ENCODE measurements at regions of chr17 and their contacts with region 1.

Region 1: GRCh38 chr17:58447039-58447975 is 30.0 kb upstream of the RNF43 start:
- DNase-seq: peak; percentile 68 to 92 (median 73)
- ATAC-seq: peak; percentile 100
- H3K4me3 ChIP-seq: no peak overlapping the region
- H3K27ac ChIP-seq: no peak overlapping the region
- H3K4me1 ChIP-seq: no peaks in the 10 kb centered on the region
- H3K27me3 ChIP-seq: no peaks in the 10 kb centered on the region
- CTCF ChIP-seq: peak; percentile 90 to 98 (median 96)
- EP300 ChIP-seq: no peak
- POLR2A ChIP-seq: no peak
- RAD21 ChIP-seq: peak; percentile 95 to 99

Region 2: DNA sequence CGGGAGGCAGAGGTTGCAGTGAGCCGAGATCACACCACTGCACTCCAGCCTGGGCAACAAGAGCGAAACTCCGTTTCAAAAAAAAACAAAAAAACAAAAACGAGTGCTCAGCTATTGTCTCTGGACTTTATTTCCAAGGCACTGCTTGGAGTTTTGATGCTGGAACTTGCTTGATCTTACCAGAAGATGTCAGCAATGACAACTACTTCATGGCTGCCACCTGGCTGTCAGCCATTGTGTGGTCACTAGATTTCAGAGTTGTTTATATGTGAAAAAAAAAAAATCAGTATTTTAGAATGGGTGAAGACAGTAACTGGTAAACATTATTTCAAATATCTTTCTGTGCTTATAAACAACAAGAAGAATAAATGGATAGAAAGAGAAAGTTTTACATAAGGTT is 325.4 kb before region 1 on chr17:
- CTCF ChIA-PET with region 1: interaction called, 12 read pairs
- POLR2A ChIA-PET with region 1: no interaction called
- in situ Hi-C with region 1: loop called (anchors 10 kb)
- intact Hi-C with region 1: loop called (anchors 1 kb)
- DNase-seq: peak; percentile 17 to 60 (median 30)
- ATAC-seq: peak; percentile 75
- H3K4me3 ChIP-seq: no peak overlapping the region
- H3K27ac ChIP-seq: no peak overlapping the region
- H3K4me1 ChIP-seq: no peaks in the 10 kb centered on the region
- H3K27me3 ChIP-seq: peaks cover 2 to 4% of the 10 kb centered on the region in 2 experiments; a peak in 3 of 5 replicates
- CTCF ChIP-seq: peak; percentile 63 to 94 (median 87)
- EP300 ChIP-seq: no peak
- POLR2A ChIP-seq: no peak
- RAD21 ChIP-seq: peak; percentile 75 to 83

Region 3: GRCh38 chr17:58200017-58200633 is 247.2 kb before region 1 on chr17:
- CTCF ChIA-PET with region 1: interaction called, 6 read pairs
- POLR2A ChIA-PET with region 1: no interaction called
- in situ Hi-C with region 1: no loop called
- intact Hi-C with region 1: loop called (anchors 1 kb)
- DNase-seq: peak; percentile 55 to 63 (median 62)
- ATAC-seq: peak; percentile 84
- H3K4me3 ChIP-seq: no peak overlapping the region
- H3K27ac ChIP-seq: no peak overlapping the region
- H3K4me1 ChIP-seq: peaks cover 12 to 17% of the 10 kb centered on the region in 2 experiments
- H3K27me3 ChIP-seq: peaks cover 0 to 20% of the 10 kb centered on the region in 2 experiments; a peak in 2 of 5 replicates
- CTCF ChIP-seq: peak; percentile 68 to 79 (median 69)
- EP300 ChIP-seq: no peak
- POLR2A ChIP-seq: no peak
- RAD21 ChIP-seq: peak; percentile 33 to 49; a peak in 2 of 4 replicates

Region 4: GRCh38 chr17:58277107-58277801 is 170.1 kb before region 1 on chr17:
- CTCF ChIA-PET with region 1: interaction called, 3 read pairs
- POLR2A ChIA-PET with region 1: interaction called, 3 read pairs
- in situ Hi-C with region 1: no loop called
- intact Hi-C with region 1: loop called (anchors 1 kb)
- DNase-seq: peak; percentile 63 to 69 (median 64)
- ATAC-seq: peak; percentile 71
- H3K4me3 ChIP-seq: no peak overlapping the region
- H3K27ac ChIP-seq: no peak overlapping the region
- H3K4me1 ChIP-seq: peaks cover 5 to 21% of the 10 kb centered on the region in 2 experiments; a peak in 3 of 5 replicates
- H3K27me3 ChIP-seq: peaks cover 30 to 78% of the 10 kb centered on the region in 2 experiments; a peak in 4 of 5 replicates
- CTCF ChIP-seq: peak; percentile 59 to 79 (median 66)
- EP300 ChIP-seq: no peak
- POLR2A ChIP-seq: no peak
- RAD21 ChIP-seq: peak; percentile 56 to 73

Region 5: GRCh38 chr17:58310516-58311428 is 136.5 kb before region 1 on chr17:
- CTCF ChIA-PET with region 1: interaction called, 5 read pairs
- POLR2A ChIA-PET with region 1: interaction called, 4 read pairs
- in situ Hi-C with region 1: loop called (anchors 5 kb)
- intact Hi-C with region 1: no loop called
- DNase-seq: no peak
- ATAC-seq: no peak
- H3K4me3 ChIP-seq: no peak overlapping the region
- H3K27ac ChIP-seq: no peak overlapping the region
- H3K4me1 ChIP-seq: peaks cover 0 to 27% of the 10 kb centered on the region in 2 experiments; a peak in 1 of 5 replicates
- H3K27me3 ChIP-seq: no peaks in the 10 kb centered on the region
- CTCF ChIP-seq: no peak
- EP300 ChIP-seq: no peak
- POLR2A ChIP-seq: no peak
- RAD21 ChIP-seq: no peak

Region 6: GRCh38 chr17:58317421-58318064 is 129.8 kb before region 1 on chr17:
- CTCF ChIA-PET with region 1: interaction called, 18 read pairs
- POLR2A ChIA-PET with region 1: no interaction called
- in situ Hi-C with region 1: loop called (anchors 5 kb)
- intact Hi-C with region 1: loop called (anchors 1 kb)
- DNase-seq: peak in 2 of 4 experiments; percentile 58 to 59
- ATAC-seq: peak; percentile 86
- H3K4me3 ChIP-seq: no peak overlapping the region
- H3K27ac ChIP-seq: no peak overlapping the region
- H3K4me1 ChIP-seq: peaks cover 0 to 17% of the 10 kb centered on the region in 2 experiments; a peak in 3 of 5 replicates
- H3K27me3 ChIP-seq: no peaks in the 10 kb centered on the region
- CTCF ChIP-seq: peak; percentile 78 to 84 (median 79)
- EP300 ChIP-seq: no peak
- POLR2A ChIP-seq: no peak
- RAD21 ChIP-seq: peak; percentile 82 to 93